ENCODE measurements at regions of chr5 and their contacts with region 1.

Region 1: DNA sequence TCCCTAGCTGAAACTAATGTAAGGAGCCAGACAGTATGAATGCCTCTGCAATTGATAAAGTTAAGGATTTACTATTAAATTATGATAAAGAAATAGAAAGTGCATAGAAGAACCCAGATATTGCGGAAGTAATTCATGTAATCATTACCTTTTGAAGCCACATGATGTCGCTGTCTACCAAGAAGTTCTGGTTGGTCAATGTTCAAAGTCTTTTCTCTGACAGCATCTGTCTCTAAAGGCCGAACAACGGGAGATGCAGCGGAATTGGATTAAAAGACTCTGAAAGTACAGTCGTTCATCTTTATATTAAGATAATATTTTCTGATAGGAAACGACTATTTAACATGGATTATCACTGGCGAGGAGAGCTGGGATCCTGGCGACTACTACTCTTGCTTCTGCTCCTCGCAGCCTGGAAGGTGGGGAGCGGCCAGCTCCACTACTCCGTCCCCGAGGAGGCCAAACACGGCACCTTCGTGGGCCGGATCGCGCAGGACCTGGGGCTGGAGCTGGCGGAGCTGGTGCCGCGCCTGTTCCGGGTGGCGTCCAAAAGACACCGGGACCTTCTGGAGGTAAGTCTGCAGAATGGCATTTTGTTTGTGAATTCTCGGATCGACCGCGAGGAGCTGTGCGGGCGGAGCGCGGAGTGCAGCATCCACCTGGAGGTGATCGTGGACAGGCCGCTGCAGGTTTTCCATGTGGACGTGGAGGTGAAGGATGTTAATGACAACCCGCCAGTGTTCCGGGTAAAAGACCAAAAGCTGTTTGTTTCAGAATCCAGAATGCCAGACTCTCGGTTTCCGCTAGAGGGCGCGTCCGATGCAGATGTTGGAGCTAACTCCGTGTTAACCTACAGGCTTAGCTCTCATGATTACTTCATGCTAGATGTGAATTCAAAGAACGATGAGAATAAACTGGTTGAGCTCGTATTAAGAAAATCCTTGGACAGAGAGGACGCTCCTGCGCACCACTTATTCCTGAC is at the start of gene PCDHA8:
- DNase-seq: peak; percentile 20 to 46
- ATAC-seq: peak; percentile 78 to 82; a peak in 5 of 6 replicates
- H3K4me3 ChIP-seq: peak within 1 kb of the TSS; percentile 42
- H3K27ac ChIP-seq: no peak within 1 kb of the TSS
- H3K4me1 ChIP-seq: no peaks in the 10 kb centered on the region
- CTCF ChIP-seq: peak; percentile 33; the same call in 1 of the 3 replicates
- EP300 ChIP-seq: no peak
- POLR2A ChIP-seq: no peak
- RAD21 ChIP-seq: peak; percentile 50 to 55
- polyA plus RNA-seq, gene PCDHA8: 0.12 and 0.16 TPM in 2 replicates

Region 2: GRCh38 chr5:140718241-140718580 is 123.1 kb before region 1 on chr5:
- CTCF ChIA-PET with region 1: no interaction called
- POLR2A ChIA-PET with region 1: no interaction called
- DNase-seq: no peak
- ATAC-seq: peak; percentile 18 to 47
- H3K4me3 ChIP-seq: peak overlapping the region; percentile 44
- H3K27ac ChIP-seq: peak overlapping the region; percentile 84 to 92
- H3K4me1 ChIP-seq: no peaks in the 10 kb centered on the region
- CTCF ChIP-seq: no peak
- EP300 ChIP-seq: no peak
- POLR2A ChIP-seq: no peak
- RAD21 ChIP-seq: no peak

Region 3: GRCh38 chr5:140868721-140869554 is 27.7 kb after region 1 on chr5 and contains the start of gene PCDHA11:
- CTCF ChIA-PET with region 1: interaction called, 10 read pairs
- POLR2A ChIA-PET with region 1: no interaction called
- DNase-seq: peak; percentile 35 to 55
- ATAC-seq: peak; percentile 78 to 89
- H3K4me3 ChIP-seq: peak within 1 kb of the TSS; percentile 15; the same call in 1 of the 3 replicates
- H3K27ac ChIP-seq: no peak within 1 kb of the TSS
- H3K4me1 ChIP-seq: no peaks in the 10 kb centered on the region
- CTCF ChIP-seq: peak; percentile 22; the same call in 2 of the 3 replicates
- EP300 ChIP-seq: no peak
- POLR2A ChIP-seq: no peak
- RAD21 ChIP-seq: peak; percentile 23 to 48; a peak in 3 of 5 replicates
- polyA plus RNA-seq, gene PCDHA11: 0.20 and 0.27 TPM in 2 replicates